ENCODE measurements at regions of chr19 and their contacts with region 1.

Region 1: DNA sequence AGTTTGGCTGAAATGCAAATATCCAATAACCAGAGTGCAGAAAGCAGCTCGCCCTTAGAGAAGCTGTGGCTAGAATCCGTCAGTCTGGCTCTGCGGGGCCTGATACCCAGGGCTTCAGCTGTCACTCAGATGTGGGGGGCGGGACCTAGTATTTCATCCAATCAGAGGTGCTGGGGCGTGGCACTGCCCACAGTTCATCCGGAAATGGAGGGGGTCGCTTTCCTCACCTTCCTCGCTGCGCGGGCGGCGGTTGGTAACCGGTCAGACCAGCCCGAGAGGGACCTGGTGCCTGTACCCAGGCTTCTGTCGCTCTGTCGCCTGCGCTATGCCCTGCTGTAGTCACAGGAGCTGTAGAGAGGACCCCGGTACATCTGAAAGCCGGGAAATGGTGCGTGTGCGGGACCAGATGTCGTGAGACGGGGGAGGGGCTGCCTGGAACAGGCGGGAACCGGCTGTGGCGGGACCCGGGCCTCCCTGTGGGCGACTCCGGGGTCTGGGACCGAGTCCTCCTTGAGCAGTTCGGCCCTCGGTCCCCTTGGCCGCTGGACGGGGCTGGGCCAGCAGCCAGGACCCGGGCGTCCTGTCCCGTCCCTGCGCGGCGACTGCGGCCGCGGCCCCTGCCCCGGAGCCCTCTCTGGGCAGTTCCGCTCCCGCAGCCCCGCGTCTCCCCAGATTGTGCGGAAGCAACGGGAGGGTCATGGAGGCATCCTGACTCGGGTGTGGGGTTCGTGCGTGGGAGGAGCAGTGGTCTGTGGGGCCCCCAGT is at the start of gene ZNF700:
- DNase-seq: peak; percentile 96
- H3K4me3 Mint-ChIP-seq: peak within 1 kb of the TSS; percentile 94
- H3K27ac Mint-ChIP-seq: peak within 1 kb of the TSS; percentile 98
- H3K4me1 Mint-ChIP-seq: peaks cover 40% of the 10 kb centered on the region
- H3K27me3 Mint-ChIP-seq: no peaks in the 10 kb centered on the region

Region 2: DNA sequence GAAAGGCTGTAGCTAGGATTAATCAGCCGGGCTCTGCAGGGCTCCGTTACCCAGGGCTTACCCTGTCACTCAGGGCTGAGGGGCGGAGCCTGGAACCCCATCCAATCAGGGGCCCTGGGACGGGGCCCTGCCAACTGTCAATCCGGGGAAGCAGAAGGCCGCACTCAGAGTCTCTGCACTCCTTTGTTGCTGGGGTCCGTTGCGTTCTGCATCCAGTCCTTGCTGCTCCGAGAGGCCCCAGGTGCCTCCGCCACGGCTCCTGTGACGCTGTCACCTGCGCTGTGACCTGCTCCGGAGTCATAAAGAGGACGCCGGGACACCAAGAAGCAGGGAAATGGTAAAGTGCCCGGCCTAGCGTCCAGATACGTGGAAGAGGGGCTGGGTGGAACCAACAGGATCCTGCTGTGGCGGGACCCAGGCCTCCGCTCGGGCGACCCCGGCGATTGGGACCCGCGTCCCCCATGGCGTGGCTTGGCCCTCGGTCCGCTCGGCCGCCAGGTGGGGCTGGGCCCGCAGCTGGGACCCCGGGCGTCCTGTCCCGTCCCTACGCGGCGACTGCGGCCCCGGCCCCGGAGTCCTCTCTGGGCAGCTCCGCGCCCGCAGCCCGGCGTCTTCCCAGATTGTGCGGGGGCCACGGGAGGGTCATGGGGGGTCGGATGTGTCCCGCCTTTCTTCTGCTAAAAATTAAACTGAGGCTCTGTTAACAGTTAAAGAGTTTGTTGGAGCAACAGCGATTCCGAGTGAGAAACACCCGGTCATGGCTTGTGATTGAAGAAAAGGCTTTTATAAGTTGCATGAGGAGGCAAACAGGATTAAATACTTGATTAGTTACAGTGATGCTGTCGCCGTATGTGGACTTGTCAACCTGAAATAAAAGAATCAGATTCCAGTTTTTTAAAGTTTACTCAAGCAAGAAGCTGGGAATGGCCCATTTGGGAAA is 126.4 kb before region 1 on chr19 and contains the start of gene ZNF491:
- CTCF ChIA-PET with region 1: interaction called, 24 read pairs
- DNase-seq: peak; percentile 90
- H3K4me3 Mint-ChIP-seq: peak within 1 kb of the TSS; percentile 84
- H3K27ac Mint-ChIP-seq: peak within 1 kb of the TSS; percentile 76
- H3K4me1 Mint-ChIP-seq: peaks cover 17% of the 10 kb centered on the region
- H3K27me3 Mint-ChIP-seq: peaks cover 21% of the 10 kb centered on the region

Region 3: DNA sequence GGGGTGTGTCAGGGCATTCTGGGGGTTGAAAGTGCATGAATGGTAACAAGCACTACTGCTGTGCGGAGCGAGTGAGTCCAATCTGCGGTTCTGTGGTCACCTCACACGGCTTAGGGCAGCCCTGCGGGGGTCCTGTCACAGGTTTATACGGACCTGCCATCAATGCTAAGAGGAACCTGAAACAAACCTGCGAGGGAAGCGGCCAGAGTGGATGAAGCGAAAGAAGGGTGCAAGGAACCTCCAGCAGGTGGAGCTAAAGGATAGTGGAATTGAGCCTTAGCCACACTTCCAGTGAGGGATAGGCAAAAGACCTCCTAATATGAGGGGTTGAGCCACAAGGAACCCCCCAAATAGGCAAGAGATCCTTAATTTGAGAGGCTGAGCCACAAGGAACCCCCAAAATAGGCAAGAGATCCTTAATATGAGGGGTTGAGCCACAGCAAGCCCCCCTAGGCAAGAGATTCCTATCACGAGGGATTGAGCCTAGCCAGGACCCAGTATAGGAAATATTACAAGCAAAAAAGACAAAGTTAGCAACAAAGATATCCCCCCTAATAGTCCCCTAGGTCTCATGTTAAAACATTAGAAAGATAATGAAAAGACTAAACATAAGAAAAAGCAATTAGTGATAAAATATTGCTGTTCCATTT is 43.8 kb before region 1 on chr19:
- CTCF ChIA-PET with region 1: interaction called, 27 read pairs
- DNase-seq: peak; percentile 75
- H3K4me3 Mint-ChIP-seq: no peak overlapping the region
- H3K27ac Mint-ChIP-seq: no peak overlapping the region
- H3K4me1 Mint-ChIP-seq: peaks cover 2% of the 10 kb centered on the region
- H3K27me3 Mint-ChIP-seq: no peaks in the 10 kb centered on the region

Region 4: DNA sequence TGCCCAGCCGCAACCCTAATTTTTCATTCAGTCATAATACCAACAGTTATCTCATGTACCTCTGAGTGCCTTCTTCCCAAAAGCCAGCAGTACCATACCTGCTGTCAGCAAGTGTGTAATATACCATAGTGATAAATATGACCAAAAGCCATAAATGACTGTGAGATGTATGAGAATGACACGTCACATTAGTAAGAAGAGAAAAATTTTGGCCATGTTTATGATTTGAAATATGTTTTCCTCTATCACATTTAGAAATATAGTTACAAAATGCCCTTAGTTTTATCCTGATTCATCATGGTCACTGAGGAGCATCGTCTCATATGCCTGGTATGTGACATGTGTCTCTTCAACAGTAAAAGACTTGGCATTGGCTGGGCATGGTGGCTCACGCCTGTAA is 11.4 kb before region 1 on chr19:
- CTCF ChIA-PET with region 1: no interaction called
- DNase-seq: no peak
- H3K4me3 Mint-ChIP-seq: no peak overlapping the region
- H3K27ac Mint-ChIP-seq: no peak overlapping the region
- H3K4me1 Mint-ChIP-seq: no peaks in the 10 kb centered on the region
- H3K27me3 Mint-ChIP-seq: no peaks in the 10 kb centered on the region

Region 5: GRCh38 chr19:11942008-11942842 is 17.2 kb after region 1 on chr19:
- CTCF ChIA-PET with region 1: no interaction called
- DNase-seq: no peak
- H3K4me3 Mint-ChIP-seq: no peak overlapping the region
- H3K27ac Mint-ChIP-seq: no peak overlapping the region
- H3K4me1 Mint-ChIP-seq: peaks cover 2% of the 10 kb centered on the region
- H3K27me3 Mint-ChIP-seq: no peaks in the 10 kb centered on the region

Region 6: DNA sequence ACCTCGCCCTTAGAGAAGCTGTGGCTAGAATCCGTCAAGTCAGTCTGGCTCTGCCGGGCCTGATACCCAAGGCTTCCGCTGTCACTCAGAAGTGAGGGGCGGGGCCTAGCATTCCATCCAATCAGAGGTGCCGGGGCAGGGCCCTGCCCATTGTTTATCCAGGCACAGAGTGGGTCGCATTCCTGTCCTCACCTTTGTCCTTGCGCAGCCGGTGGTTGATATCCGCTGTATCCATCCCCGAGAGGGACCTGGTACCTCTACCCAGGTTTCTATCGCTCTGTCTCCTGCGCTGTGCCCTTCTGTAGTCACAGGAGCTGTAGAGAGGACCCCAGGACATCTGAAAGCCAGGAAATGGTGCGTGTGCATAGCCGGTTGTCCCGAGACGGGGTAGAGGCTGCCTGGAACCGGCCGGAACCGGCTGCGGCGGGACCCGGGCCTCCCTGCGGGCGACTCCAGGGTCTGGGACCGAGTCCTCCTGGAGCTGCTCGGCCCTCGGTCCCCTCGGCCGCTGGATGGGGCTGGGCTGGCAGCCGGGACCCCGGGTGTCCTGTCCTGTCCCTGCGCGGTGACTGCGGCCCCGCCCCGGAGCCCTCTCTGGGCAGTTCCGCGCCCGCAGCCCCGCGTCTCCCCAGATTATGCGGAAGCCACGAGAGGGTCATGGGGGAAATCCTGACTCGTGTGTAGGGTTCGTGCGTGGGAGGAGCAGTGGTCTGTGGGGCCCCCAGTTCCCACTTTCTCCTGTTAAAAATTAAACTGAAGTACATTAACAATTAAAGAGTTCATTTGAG is 40.0 kb after region 1 on chr19 and contains the start of gene ZNF763:
- CTCF ChIA-PET with region 1: interaction called, 26 read pairs
- DNase-seq: peak; percentile 95
- H3K4me3 Mint-ChIP-seq: peak within 1 kb of the TSS; percentile 86
- H3K27ac Mint-ChIP-seq: peak within 1 kb of the TSS; percentile 94
- H3K4me1 Mint-ChIP-seq: peaks cover 22% of the 10 kb centered on the region
- H3K27me3 Mint-ChIP-seq: no peaks in the 10 kb centered on the region

Region 7: GRCh38 chr19:11987405-11988281 is 62.6 kb after region 1 on chr19:
- CTCF ChIA-PET with region 1: interaction called, 84 read pairs
- DNase-seq: peak; percentile 97
- H3K4me3 Mint-ChIP-seq: peak overlapping the region; percentile 95
- H3K27ac Mint-ChIP-seq: peak overlapping the region; percentile 94
- H3K4me1 Mint-ChIP-seq: peaks cover 16% of the 10 kb centered on the region
- H3K27me3 Mint-ChIP-seq: peaks cover 4% of the 10 kb centered on the region

Region 8: DNA sequence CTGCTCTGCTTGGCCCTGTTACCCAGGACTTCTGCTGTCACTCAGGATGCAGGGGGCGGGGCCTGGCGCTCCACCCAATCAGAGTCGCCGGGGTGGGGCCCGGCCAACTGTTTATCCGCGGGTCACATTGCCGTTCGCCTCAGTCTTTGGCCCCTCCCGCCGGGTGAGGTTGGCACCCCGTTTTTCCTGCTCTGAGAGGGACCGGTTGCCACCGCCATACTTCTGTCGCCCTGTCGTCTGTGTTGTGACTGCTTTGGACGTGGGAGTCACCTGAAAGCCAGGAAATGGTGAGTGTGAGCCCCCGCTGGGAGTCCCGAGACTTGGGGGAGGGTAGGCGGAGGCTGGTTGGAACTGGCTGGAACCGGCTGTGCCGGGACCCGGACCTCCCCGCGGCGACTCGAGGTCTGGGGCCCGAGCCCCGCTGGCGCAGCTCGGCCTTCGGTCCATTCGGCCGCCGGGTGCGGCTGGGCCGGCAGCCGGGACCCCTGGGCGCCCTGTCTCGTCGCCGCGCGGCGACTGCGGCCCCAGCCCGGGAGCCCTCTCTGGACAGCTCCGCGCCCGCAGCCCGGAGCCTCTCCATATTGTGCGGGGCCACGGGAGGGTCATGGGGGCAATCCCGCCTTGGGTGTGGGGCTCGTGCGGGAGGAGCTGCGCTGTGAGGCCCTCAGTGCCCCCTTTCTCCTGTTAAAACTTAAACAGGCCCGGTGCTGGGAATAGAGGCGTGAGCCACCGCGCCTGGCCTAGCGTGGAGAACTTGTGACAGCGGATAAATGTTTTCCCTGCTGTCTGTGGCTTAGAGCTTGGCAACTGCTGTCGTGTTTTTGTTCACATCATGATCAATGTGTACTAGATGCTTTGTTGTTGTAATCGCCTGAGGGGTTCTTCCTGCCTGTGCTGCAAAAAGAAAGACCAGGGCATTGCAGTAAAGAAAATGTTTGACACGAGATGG is 139.8 kb after region 1 on chr19 and contains the start of gene ZNF844:
- CTCF ChIA-PET with region 1: interaction called, 11 read pairs
- DNase-seq: peak; percentile 73
- H3K4me3 Mint-ChIP-seq: peak within 1 kb of the TSS; percentile 75
- H3K27ac Mint-ChIP-seq: peak within 1 kb of the TSS; percentile 68
- H3K4me1 Mint-ChIP-seq: peaks cover 6% of the 10 kb centered on the region
- H3K27me3 Mint-ChIP-seq: no peaks in the 10 kb centered on the region

Measured in activated naive CD4-positive, alpha-beta T cell treated with anti-CD3 and anti-CD28 coated beads, Interleukin-2, amount 10 ng/mL, durations not matched to agents 7 days and 5 days (primary cell).